Left cardiac atrium (tissue), 4 donors: ENCODE measurements at regions of chr6 and their contacts with region 1.

Region 1: GRCh38 chr6:32355018-32355417 is 16.7 kb downstream of the TSBP1 start:
- DNase-seq: no peak
- ATAC-seq: no peak

Region 2: DNA sequence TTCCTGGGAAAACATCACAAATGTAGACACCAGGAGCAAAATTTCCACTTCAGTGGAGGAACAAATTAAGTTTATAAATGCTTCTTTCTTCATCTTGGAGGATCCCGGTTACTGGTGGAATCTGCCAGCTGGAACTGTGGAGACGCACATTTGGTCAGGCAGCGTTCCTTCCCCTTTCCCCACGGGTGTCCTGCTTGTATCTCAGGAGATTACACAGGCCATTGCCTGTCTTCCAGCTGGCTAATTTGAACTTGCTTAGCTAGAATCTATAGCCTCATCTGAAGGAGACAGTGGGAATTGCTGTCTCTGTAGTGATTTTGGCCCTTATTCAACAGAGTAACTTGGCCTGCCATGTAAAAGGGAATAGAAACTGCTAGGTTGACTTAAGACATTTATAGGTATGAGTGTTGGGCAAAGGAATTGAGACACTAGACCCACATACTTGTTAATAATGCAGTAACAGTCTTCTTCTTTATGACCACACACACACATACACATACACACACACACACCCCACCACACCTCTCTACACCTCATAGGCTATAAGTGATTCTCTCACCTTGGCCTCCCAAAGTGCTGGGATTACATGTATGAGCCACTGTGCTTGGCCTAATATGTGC is 17.7 kb before region 1 on chr6:
- intact Hi-C with region 1: loop called in 1 of 2 experiments (anchors 1 kb)
- DNase-seq: no peak
- ATAC-seq: no peak